Heart right ventricle (tissue), 16 donors: ENCODE measurements at regions of chrX and their contacts with region 1.

Region 1: GRCh38 chrX:153947009-153947769 is 2.7 kb upstream of the RENBP start:
- DNase-seq: peak; percentile 64 to 73
- ATAC-seq: peak; percentile 48 to 81 (median 71)
- H3K4me3 ChIP-seq: no peak overlapping the region
- H3K27ac ChIP-seq: peak overlapping the region; percentile 11 to 78 (median 70)
- H3K4me1 ChIP-seq: peaks cover 0 to 40% (median 11%) of the 10 kb centered on the region in 9 donors
- H3K27me3 ChIP-seq: peaks cover 0 to 29% (median 0%) of the 10 kb centered on the region in 7 donors
- CTCF ChIP-seq: peak; percentile 62 to 91 (median 75)

Region 2: DNA sequence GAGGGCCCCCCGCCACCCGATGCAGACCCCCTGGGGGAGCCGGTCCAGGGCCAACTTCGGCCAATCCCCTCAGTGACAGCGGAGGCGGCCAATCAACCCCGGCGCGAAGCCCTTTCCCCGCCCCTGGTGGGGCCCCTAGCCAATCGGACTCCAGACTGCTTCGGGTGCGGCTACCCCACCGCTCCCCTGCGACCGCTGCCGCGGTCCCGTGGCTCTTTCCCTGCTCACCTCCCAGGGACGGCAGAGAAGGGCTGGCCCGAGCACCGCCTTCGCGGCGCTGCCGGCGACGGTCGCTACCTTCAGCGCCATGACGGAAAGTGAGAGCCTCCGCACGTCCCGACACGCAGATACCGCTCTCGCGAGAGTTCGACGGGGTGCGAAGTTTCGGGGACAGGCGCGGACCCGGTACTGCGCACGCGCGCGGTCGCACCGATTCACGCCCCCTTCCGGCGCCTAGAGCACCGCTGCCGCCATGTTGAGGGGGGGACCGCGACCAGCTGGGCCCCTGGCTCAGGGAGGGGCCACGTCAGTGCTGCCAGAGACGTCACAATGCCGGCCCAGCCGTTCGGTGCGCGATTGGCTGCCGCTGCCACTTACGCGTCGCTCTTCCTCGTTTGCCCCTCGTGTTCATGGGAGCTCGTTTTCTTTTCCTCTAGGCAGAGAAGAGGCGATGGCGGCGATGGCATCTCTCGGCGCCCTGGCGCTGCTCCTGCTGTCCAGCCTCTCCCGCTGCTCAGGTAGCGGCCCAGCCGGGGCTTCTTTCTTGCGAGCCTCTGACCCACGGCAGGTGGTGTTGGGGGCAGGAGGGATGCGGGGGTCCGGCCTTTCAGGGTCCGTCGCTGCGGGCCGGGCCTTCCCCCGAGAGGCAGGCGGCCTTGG is 152.9 kb before region 1 on chrX and contains the starts of genes IDH3G and SSR4:
- intact Hi-C with region 1: loop called in 1 of 10 experiments (anchors 10 kb)
- DNase-seq: peak; percentile 91 to 93
- ATAC-seq: peak; percentile 93 to 97 (median 96)
- H3K4me3 ChIP-seq: peak within 1 kb of the TSS; percentile 53 to 80 (median 75)
- H3K27ac ChIP-seq: peak within 1 kb of the TSS; percentile 88 to 97 (median 94)
- H3K4me1 ChIP-seq: peaks cover 0 to 44% (median 26%) of the 10 kb centered on the region in 9 donors
- H3K27me3 ChIP-seq: no peaks in the 10 kb centered on the region
- CTCF ChIP-seq: peak in 7 of 9 donors; percentile 7 to 54 (median 31)
- total RNA-seq, gene IDH3G: 58.7 to 86.9 (median 74.5) TPM
- total RNA-seq, gene SSR4: 94.1 to 227 (median 144) TPM